ENCODE measurements at regions of chr17 and their contacts with region 1.

Region 1: GRCh38 chr17:6970866-6971391 is 24.9 kb upstream of the ALOX12 start:
- DNase-seq: no peak
- ATAC-seq: no peak
- H3K4me3 ChIP-seq: no peak overlapping the region
- H3K27ac ChIP-seq: no peak overlapping the region
- H3K4me1 ChIP-seq: no peaks in the 10 kb centered on the region
- H3K27me3 ChIP-seq: no peaks in the 10 kb centered on the region; the same call in 1 of the 2 replicates
- CTCF ChIP-seq: no peak
- POLR2A ChIP-seq: no peak
- RAD21 ChIP-seq: no peak

Region 2: GRCh38 chr17:5430413-5430999 is 1540.4 kb before region 1 on chr17:
- CTCF ChIA-PET with region 1: no interaction called
- POLR2A ChIA-PET with region 1: interaction called, 18 read pairs
- dilution Hi-C with region 1: no loop called
- in situ Hi-C with region 1: no loop called
- intact Hi-C with region 1: no loop called
- DNase-seq: no peak
- ATAC-seq: no peak
- H3K4me3 ChIP-seq: no peak overlapping the region
- H3K27ac ChIP-seq: no peak overlapping the region
- H3K4me1 ChIP-seq: peaks cover 8% of the 10 kb centered on the region
- H3K27me3 ChIP-seq: no peaks in the 10 kb centered on the region
- CTCF ChIP-seq: no peak
- POLR2A ChIP-seq: no peak
- RAD21 ChIP-seq: no peak

Region 3: DNA sequence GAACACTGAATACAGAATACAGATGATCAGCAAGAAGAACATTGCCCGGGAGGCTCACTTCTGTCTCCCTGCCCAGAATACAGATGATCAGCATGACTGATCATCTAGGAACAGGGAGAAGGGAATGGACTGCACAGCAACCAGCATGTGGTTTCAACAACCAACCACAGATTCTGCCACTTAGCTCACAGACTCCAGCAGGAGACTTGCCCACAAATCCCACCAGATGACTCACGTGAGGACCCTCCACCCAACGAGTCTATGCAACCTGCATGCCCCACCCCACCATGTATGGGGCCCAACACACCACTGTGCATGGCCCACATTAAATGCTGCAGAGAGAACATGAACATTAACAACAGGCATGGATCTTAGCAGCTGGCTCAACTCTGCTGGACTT is 11.2 kb before region 1 on chr17:
- CTCF ChIA-PET with region 1: no interaction called
- POLR2A ChIA-PET with region 1: no interaction called
- dilution Hi-C with region 1: no loop called
- in situ Hi-C with region 1: no loop called
- intact Hi-C with region 1: no loop called
- DNase-seq: no peak
- ATAC-seq: no peak
- H3K4me3 ChIP-seq: no peak overlapping the region
- H3K27ac ChIP-seq: no peak overlapping the region
- H3K4me1 ChIP-seq: no peaks in the 10 kb centered on the region
- H3K27me3 ChIP-seq: no peaks in the 10 kb centered on the region; the same call in 1 of the 2 replicates
- CTCF ChIP-seq: no peak
- POLR2A ChIP-seq: no peak
- RAD21 ChIP-seq: no peak

Region 4: GRCh38 chr17:7114875-7115614 is 144.1 kb after region 1 on chr17:
- CTCF ChIA-PET with region 1: no interaction called
- POLR2A ChIA-PET with region 1: no interaction called
- dilution Hi-C with region 1: no loop called
- in situ Hi-C with region 1: no loop called
- intact Hi-C with region 1: no loop called
- DNase-seq: no peak
- ATAC-seq: no peak
- H3K4me3 ChIP-seq: no peak overlapping the region
- H3K27ac ChIP-seq: no peak overlapping the region
- H3K4me1 ChIP-seq: no peaks in the 10 kb centered on the region
- H3K27me3 ChIP-seq: peaks cover 20% of the 10 kb centered on the region
- CTCF ChIP-seq: no peak
- POLR2A ChIP-seq: no peak
- RAD21 ChIP-seq: no peak

Measured in IMR-90 (cell line).